ENCODE measurements at regions of chr16 and their contacts with region 1.

Region 1: DNA sequence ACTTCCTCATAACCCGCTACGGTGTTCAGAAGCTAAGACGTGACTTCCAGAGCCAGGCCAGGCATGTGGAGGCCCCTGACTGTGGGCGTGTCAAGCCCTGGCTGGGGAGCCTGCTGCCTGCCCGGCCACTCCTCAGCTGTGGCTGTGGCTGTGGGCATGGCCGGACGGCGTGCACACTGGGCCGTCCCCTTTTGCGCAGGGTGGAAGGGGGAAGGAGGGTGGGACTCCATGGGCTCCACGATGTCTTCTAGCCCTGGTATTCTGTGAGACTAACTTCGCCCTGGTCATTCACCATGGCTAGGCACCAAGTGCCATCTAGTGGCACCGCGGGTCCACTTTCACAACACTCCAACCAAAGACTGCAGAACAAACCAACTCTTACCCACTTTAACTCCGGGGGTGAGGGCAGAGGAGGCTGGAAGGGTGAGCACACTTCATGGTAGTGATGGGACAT is 67.9 kb downstream of the N4BP1 start:
- DNase-seq: peak; percentile 75 to 88 (median 80)
- ATAC-seq: peak; percentile 78 to 86
- H3K4me3 ChIP-seq: no peak overlapping the region
- H3K27ac ChIP-seq: no peak overlapping the region
- H3K4me1 ChIP-seq: peaks cover 18% of the 10 kb centered on the region
- H3K27me3 ChIP-seq: no peaks in the 10 kb centered on the region

Region 2: GRCh38 chr16:48276102-48276501 is 265.9 kb before region 1 on chr16:
- intact Hi-C with region 1: no loop called
- DNase-seq: no peak
- ATAC-seq: no peak
- H3K4me3 ChIP-seq: no peak overlapping the region
- H3K27ac ChIP-seq: peak overlapping the region; percentile 75
- H3K4me1 ChIP-seq: peaks cover 3% of the 10 kb centered on the region
- H3K27me3 ChIP-seq: no peaks in the 10 kb centered on the region

Region 3: GRCh38 chr16:48353565-48354163 is 188.4 kb before region 1 on chr16:
- intact Hi-C with region 1: loop called in 3 of 4 experiments (anchors 5 to 10 kb)
- DNase-seq: peak in 2 of 3 donors; percentile 44 to 72
- ATAC-seq: peak; percentile 85 to 86
- H3K4me3 ChIP-seq: no peak overlapping the region
- H3K27ac ChIP-seq: peak overlapping the region; percentile 53
- H3K4me1 ChIP-seq: no peaks in the 10 kb centered on the region
- H3K27me3 ChIP-seq: no peaks in the 10 kb centered on the region

Measured in right cardiac atrium (tissue), 5 donors.